Aorta (tissue), 5 donors: ENCODE measurements at regions of chr14 and their contacts with region 1.

Region 1: DNA sequence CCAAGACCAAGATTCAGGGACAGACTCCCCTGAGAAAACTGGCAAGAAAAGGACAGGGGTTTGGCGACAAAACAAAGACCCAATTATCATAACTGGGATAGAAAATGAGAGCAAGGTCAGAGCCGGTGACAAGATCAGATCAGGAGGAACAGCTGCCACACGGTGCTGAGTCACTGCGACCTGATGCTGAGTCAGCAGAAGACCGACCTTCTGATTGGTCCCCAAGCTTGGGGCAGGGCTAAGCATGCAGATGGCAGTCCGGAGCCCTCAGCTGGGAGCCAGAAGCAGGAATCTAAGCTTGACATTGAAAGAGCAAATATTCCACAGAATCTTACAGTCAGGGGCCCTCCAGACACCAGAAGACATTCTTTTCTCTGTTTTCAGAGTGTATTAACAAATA is 19.1 kb upstream of the ARMH4 start:
- DNase-seq: peak; percentile 82 to 84
- ATAC-seq: peak; percentile 69
- H3K4me3 ChIP-seq: no peak overlapping the region
- H3K27ac ChIP-seq: no peak overlapping the region
- H3K4me1 ChIP-seq: no peaks in the 10 kb centered on the region
- H3K27me3 ChIP-seq: no peaks in the 10 kb centered on the region

Region 2: DNA sequence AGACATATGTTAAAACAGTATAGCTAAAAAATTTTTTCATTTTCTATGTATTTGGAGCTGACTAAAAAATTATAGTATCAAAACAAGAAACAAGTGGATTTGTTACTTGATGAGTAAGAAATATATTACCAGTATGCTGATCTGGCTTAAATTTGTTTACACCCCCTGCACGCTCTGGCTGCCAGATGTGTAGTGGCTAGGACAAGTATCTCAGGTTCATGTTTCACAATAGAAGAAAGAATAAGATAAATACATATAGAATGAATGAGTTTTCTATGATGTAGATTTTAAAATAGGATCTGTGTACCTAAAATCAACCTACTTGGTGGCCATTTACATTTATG is 767.6 kb before region 1 on chr14:
- intact Hi-C with region 1: no loop called
- DNase-seq: no peak
- ATAC-seq: no peak
- H3K4me3 ChIP-seq: no peak overlapping the region
- H3K27ac ChIP-seq: no peak overlapping the region
- H3K4me1 ChIP-seq: peaks cover 0 to 4% of the 10 kb centered on the region in 2 donors
- H3K27me3 ChIP-seq: no peaks in the 10 kb centered on the region

Region 3: DNA sequence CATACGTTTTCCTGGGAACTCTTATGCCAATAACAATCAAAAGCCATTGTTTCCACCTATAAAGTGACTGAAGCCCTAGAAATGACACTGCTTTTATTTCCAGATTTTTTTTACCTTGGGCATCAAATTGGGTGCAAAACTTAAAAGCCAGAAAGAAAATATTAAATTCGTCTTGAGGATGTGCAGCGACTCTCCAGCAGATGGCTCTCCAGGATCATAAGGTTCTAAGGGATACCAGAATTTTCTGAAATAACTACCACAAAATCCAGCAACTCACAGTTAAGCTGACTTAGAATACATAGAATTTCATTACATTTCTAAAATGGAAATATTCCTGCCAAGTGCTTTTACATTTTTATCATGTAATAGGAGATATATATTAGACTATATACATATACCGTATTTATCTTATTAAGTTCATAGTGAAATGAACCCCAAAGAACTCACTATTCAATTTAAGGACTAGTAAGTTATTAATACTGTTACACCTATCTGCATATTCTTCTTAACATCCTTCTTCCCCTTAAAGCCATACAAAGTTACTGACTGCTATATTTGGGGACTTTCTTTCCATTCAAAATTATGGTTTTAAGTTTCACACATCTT is 63.0 kb before region 1 on chr14:
- intact Hi-C with region 1: loop called (anchors 2 to 5 kb)
- DNase-seq: no peak
- ATAC-seq: peak; percentile 60
- H3K4me3 ChIP-seq: no peak overlapping the region
- H3K27ac ChIP-seq: no peak overlapping the region
- H3K4me1 ChIP-seq: no peaks in the 10 kb centered on the region
- H3K27me3 ChIP-seq: no peaks in the 10 kb centered on the region

Region 4: DNA sequence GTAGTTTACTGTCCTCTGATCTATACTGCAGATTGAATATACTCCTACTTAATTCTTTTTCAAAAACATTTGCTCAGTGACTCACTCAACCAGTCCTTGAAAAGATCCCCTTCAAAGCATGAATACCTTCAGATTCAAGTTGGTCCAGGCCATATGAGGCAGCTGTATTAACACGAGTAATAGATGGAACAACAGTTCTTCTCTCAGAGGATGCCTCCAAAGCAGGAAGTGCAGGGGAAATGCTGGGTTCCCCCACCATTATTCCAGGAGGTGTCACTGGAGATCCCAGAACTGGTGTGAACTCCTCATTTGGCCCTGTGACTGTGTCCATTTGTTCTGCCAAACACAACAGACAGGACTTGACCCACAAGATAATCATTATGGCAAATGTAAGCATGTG is 39.7 kb before region 1 on chr14:
- intact Hi-C with region 1: no loop called
- DNase-seq: no peak
- ATAC-seq: peak; percentile 56
- H3K4me3 ChIP-seq: no peak overlapping the region
- H3K27ac ChIP-seq: peak overlapping the region in 1 of 2 donors; percentile 51
- H3K4me1 ChIP-seq: peaks cover 3 to 6% of the 10 kb centered on the region in 2 donors
- H3K27me3 ChIP-seq: no peaks in the 10 kb centered on the region

Region 5: DNA sequence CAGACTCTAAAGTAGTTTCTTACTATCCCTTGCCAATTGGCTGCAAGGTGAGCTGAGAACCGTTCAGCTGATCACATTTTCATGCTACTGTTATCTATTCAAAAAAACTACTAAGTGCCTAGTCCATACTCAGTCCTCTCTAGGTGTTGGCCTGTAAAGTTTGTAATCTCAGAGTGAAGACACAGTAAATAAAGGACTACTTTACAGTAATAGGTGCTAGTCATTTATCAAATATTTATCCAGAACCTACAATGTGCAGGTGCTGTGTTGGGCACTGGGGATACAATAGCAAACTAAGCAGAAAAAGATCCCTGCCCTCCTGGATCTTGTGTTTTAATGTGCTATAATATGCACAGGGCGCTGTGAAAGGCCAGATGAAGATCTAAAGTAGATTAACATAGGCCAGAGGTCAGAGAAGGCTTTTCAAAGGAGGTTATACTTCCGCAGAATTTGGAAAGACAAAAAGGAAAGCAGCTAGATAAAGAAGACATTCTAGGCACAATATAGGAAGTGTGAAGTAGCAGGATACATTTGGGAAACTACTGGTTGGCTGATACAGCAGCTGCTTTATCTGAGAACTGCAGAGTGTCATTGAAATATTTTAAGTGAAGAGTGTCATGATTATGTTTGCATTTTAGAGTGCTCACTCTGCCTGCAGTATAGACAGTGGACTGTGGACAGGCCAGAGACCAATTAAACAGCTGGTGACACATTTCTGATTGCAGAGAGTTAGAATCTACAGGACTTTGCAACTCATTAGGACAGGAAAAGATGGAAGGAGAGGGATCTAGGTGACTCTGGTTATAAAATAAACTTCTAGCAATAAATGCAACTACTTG is 20.9 kb after region 1 on chr14:
- intact Hi-C with region 1: loop called in 1 of 2 experiments (anchors 1 kb)
- DNase-seq: no peak
- ATAC-seq: no peak
- H3K4me3 ChIP-seq: no peak overlapping the region
- H3K27ac ChIP-seq: no peak overlapping the region
- H3K4me1 ChIP-seq: peaks cover 0 to 5% of the 10 kb centered on the region in 2 donors
- H3K27me3 ChIP-seq: no peaks in the 10 kb centered on the region

Region 6: GRCh38 chr14:58227096-58227819 is 56.2 kb after region 1 on chr14:
- intact Hi-C with region 1: no loop called
- DNase-seq: no peak
- ATAC-seq: no peak
- H3K4me3 ChIP-seq: no peak overlapping the region
- H3K27ac ChIP-seq: no peak overlapping the region
- H3K4me1 ChIP-seq: no peaks in the 10 kb centered on the region
- H3K27me3 ChIP-seq: no peaks in the 10 kb centered on the region